ENCODE measurements at regions of chr11 and their contacts with region 1.

Region 1: DNA sequence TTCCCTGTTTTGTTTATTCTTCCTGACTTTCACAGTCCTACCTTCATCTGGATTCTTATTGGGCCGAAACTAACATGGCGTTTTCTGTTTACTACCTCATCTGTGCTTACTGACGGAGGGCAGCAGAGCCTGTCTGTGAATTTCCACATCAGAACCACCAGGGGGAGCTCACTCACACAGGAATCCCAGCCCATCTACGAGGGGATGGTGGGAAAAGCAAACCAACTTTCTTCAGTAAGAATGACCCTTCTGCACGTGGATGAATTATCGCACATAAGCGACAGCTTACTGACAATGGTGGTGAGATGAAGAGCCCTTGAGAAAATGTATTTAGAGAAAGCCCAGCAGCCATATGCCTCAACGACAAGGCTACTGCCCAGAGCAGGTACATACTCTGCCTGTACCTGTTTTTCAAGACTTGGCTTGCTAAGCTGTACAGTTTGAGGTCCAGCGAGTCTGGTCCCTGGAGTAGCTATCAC is 42.5 kb downstream of the LARGE2 start:
- DNase-seq: peak; percentile 10 to 86 (median 45)
- ATAC-seq: peak; percentile 85 to 91 (median 86)
- H3K4me3 ChIP-seq: no peak overlapping the region
- H3K4me3 Mint-ChIP-seq: no peak overlapping the region
- H3K27ac ChIP-seq: peak overlapping the region; percentile 8
- H3K27ac Mint-ChIP-seq: no peak overlapping the region
- H3K4me1 ChIP-seq: no peaks in the 10 kb centered on the region
- H3K4me1 Mint-ChIP-seq: no peaks in the 10 kb centered on the region
- H3K27me3 ChIP-seq: no peaks in the 10 kb centered on the region
- H3K27me3 Mint-ChIP-seq: no peaks in the 10 kb centered on the region

Region 2: GRCh38 chr11:45917623-45918330 is 47.2 kb before region 1 on chr11 and contains the start of gene PEX16:
- CTCF ChIA-PET with region 1: interaction called, 4 to 10 read pairs
- POLR2A ChIA-PET with region 1: no interaction called
- DNase-seq: peak; percentile 78 to 99 (median 96)
- ATAC-seq: peak; percentile 85 to 91 (median 89)
- H3K4me3 ChIP-seq: peak within 1 kb of the TSS; percentile 97 to 98
- H3K4me3 Mint-ChIP-seq: peak within 1 kb of the TSS; percentile 88 to 98 (median 91)
- H3K27ac ChIP-seq: peak within 1 kb of the TSS; percentile 95
- H3K27ac Mint-ChIP-seq: peak within 1 kb of the TSS; percentile 98 to 100
- H3K4me1 ChIP-seq: peaks cover 4 to 56% of the 10 kb centered on the region in 2 experiments
- H3K4me1 Mint-ChIP-seq: peaks cover 46 to 64% (median 56%) of the 10 kb centered on the region in 3 donors
- H3K27me3 ChIP-seq: peaks cover 0 to 10% of the 10 kb centered on the region in 2 experiments
- H3K27me3 Mint-ChIP-seq: peaks cover 0 to 5% of the 10 kb centered on the region in 2 donors
- total RNA-seq, gene PEX16: 49.4 to 87.5 (median 65.2) TPM

Region 3: DNA sequence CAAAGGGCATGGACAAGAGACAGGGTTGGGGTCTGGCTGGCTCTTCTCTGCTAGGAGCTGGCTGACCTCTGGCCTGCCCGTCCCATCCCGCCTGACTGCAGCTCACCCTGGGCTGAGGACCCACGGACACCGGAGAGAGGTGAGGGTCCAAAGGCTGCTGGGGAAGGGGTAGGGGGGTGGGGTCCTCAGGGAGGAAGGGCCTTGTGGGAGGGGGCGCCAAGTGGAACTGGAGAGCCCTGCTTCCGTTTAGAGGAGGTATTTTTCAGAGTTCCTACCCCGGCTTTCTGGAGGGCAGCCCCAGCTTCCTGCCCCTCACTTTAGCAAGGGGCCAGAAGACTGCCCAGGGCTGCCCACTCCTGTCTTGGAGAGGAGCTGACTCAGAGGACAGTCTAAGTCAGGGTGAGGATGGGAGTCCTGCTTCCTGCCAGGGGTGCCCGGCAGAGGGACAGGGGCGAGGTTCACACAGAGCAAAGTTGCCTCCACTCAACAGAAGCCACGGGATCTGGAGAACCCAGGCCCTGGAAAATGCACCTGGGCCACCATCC is 35.4 kb before region 1 on chr11:
- CTCF ChIA-PET with region 1: interaction called, 3 to 11 read pairs
- POLR2A ChIA-PET with region 1: interaction called in 1 of 2 experiments, 12 read pairs
- DNase-seq: no peak
- ATAC-seq: peak; percentile 28 to 31 (median 30)
- H3K4me3 ChIP-seq: no peak overlapping the region
- H3K4me3 Mint-ChIP-seq: peak overlapping the region in 2 of 3 donors; percentile 61 to 87
- H3K27ac ChIP-seq: peak overlapping the region; percentile 70
- H3K27ac Mint-ChIP-seq: peak overlapping the region; percentile 94
- H3K4me1 ChIP-seq: peaks cover 0 to 57% of the 10 kb centered on the region in 2 experiments
- H3K4me1 Mint-ChIP-seq: peaks cover 36 to 53% (median 37%) of the 10 kb centered on the region in 3 donors
- H3K27me3 ChIP-seq: peaks cover under 1 to 3% of the 10 kb centered on the region in 2 experiments
- H3K27me3 Mint-ChIP-seq: no peaks in the 10 kb centered on the region

Region 4: DNA sequence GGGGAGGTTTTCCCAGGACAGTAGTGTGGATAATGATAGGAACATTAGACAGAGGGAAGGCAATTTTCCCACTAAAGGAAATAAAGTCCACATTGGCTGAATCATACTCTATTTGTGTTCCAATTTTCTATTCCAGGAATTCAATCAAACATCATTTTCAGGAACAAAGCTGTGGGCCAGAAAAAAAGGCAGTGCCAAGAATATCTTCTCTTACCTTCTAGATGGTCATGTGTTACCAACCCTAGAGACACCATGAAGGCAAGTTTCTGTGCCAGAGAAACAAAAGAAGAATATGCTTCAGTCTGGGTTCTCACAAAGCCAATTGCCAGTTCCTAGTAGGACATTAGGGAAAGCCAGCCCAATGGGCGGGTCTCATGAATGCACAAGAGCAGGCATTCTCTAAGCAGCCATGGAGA is 14.9 kb before region 1 on chr11:
- CTCF ChIA-PET with region 1: interaction called, 10 to 13 read pairs
- POLR2A ChIA-PET with region 1: interaction called in 1 of 2 experiments, 16 read pairs
- DNase-seq: no peak
- ATAC-seq: no peak
- H3K4me3 ChIP-seq: no peak overlapping the region
- H3K4me3 Mint-ChIP-seq: no peak overlapping the region
- H3K27ac ChIP-seq: no peak overlapping the region
- H3K27ac Mint-ChIP-seq: no peak overlapping the region
- H3K4me1 ChIP-seq: no peaks in the 10 kb centered on the region
- H3K4me1 Mint-ChIP-seq: no peaks in the 10 kb centered on the region
- H3K27me3 ChIP-seq: no peaks in the 10 kb centered on the region
- H3K27me3 Mint-ChIP-seq: no peaks in the 10 kb centered on the region

Region 5: GRCh38 chr11:45982656-45983470 is 17.9 kb after region 1 on chr11:
- CTCF ChIA-PET with region 1: interaction called, 3 to 14 read pairs
- POLR2A ChIA-PET with region 1: interaction called in 1 of 2 experiments, 17 read pairs
- DNase-seq: no peak
- ATAC-seq: no peak
- H3K4me3 ChIP-seq: no peak overlapping the region
- H3K4me3 Mint-ChIP-seq: no peak overlapping the region
- H3K27ac ChIP-seq: no peak overlapping the region
- H3K27ac Mint-ChIP-seq: peak overlapping the region in 1 of 2 donors; percentile 23
- H3K4me1 ChIP-seq: peaks cover 0 to 4% of the 10 kb centered on the region in 2 experiments
- H3K4me1 Mint-ChIP-seq: peaks cover 24 to 39% (median 34%) of the 10 kb centered on the region in 3 donors
- H3K27me3 ChIP-seq: no peaks in the 10 kb centered on the region
- H3K27me3 Mint-ChIP-seq: no peaks in the 10 kb centered on the region

Region 6: DNA sequence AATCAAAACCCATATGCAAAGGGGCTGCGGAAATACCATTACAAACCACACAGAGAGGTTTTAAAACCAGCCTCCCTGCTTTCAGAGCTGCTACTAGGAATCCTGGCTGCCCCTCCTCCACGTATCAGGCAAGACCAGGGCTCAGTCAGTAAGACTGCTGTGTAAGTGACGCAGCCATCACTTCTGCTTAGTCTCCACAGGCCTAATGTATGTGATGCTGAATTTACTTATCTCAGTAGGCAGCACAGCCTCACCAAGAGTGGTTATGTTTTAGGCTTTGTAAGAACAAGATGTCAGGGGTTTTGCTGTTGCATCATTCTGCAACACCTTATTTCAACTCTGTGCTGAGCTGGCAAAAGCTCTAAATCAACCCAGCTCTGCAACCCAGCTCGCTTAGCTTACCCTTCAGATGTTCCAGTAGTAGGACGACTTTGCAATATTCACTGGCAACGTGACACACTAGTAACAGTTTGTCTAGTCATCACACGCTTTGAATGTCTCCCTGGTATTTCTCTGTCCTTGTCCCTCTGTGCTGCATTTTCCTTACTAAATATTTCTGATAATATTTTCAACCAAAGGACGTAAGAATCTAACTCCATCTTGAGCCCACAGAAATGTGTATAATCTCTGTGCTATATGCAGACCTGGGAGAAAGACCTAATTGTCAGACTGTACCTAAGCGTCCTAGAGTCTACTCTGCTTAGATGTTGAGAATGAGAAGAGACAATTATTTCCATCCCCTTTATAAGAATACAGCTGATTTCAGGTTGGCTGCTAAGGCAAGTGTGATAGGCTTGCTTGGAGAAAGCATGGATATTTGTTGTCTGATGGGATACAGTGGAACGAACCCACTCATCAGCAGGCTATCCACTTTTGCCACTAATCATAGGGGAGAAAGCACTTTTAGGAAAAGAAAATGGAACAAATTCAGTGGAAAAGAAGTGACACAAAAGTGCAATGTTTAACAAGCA is 29.7 kb after region 1 on chr11:
- CTCF ChIA-PET with region 1: interaction called, 4 to 12 read pairs
- POLR2A ChIA-PET with region 1: interaction called in 1 of 2 experiments, 3 read pairs
- DNase-seq: no peak
- ATAC-seq: no peak
- H3K4me3 ChIP-seq: no peak overlapping the region
- H3K4me3 Mint-ChIP-seq: no peak overlapping the region
- H3K27ac ChIP-seq: no peak overlapping the region
- H3K27ac Mint-ChIP-seq: no peak overlapping the region
- H3K4me1 ChIP-seq: no peaks in the 10 kb centered on the region
- H3K4me1 Mint-ChIP-seq: peaks cover 16 to 29% (median 26%) of the 10 kb centered on the region in 3 donors
- H3K27me3 ChIP-seq: no peaks in the 10 kb centered on the region
- H3K27me3 Mint-ChIP-seq: no peaks in the 10 kb centered on the region

Region 7: GRCh38 chr11:46006418-46007070 is 41.6 kb after region 1 on chr11:
- CTCF ChIA-PET with region 1: interaction called in 1 of 2 experiments, 36 read pairs
- POLR2A ChIA-PET with region 1: no interaction called
- DNase-seq: peak in 12 of 35 experiments; percentile 1 to 76 (median 6)
- ATAC-seq: peak; percentile 50 to 86 (median 79)
- H3K4me3 ChIP-seq: no peak overlapping the region
- H3K4me3 Mint-ChIP-seq: no peak overlapping the region
- H3K27ac ChIP-seq: no peak overlapping the region
- H3K27ac Mint-ChIP-seq: no peak overlapping the region
- H3K4me1 ChIP-seq: no peaks in the 10 kb centered on the region
- H3K4me1 Mint-ChIP-seq: peaks cover 2 to 10% (median 8%) of the 10 kb centered on the region in 3 donors
- H3K27me3 ChIP-seq: no peaks in the 10 kb centered on the region
- H3K27me3 Mint-ChIP-seq: no peaks in the 10 kb centered on the region

Region 8: DNA sequence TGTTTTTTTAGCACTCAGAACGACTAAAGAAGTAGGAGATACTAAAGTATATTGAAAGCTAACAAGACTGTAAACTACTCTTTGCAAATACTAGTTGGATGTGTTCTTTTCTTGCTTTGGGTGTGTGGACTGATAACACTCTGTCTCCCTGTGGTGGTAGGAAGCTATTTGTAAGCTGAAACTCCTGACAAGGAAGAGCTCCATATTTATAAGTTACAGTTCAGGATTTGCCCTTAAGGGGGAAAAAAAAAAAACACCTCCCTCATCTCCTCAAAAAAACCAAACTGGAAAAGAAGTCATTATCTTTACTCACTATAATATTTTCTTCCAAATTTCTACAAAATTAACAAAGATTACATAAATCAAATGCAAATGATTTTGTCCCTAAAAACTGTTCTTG is 52.4 kb after region 1 on chr11:
- CTCF ChIA-PET with region 1: no interaction called
- POLR2A ChIA-PET with region 1: no interaction called
- DNase-seq: no peak
- ATAC-seq: no peak
- H3K4me3 ChIP-seq: no peak overlapping the region
- H3K4me3 Mint-ChIP-seq: no peak overlapping the region
- H3K27ac ChIP-seq: no peak overlapping the region
- H3K27ac Mint-ChIP-seq: no peak overlapping the region
- H3K4me1 ChIP-seq: no peaks in the 10 kb centered on the region
- H3K4me1 Mint-ChIP-seq: peaks cover 0 to 10% (median 9%) of the 10 kb centered on the region in 3 donors
- H3K27me3 ChIP-seq: no peaks in the 10 kb centered on the region
- H3K27me3 Mint-ChIP-seq: no peaks in the 10 kb centered on the region